H1 (cell line): ENCODE measurements at regions of chr11 and their contacts with region 1.

Region 1: GRCh38 chr11:118605116-118605867 is 2.1 kb upstream of the PHLDB1 start:
- DNase-seq: no peak
- H3K4me3 ChIP-seq: no peak overlapping the region
- H3K27ac ChIP-seq: no peak overlapping the region
- H3K4me1 ChIP-seq: peaks cover 12 to 32% (median 14%) of the 10 kb centered on the region in 4 experiments
- H3K27me3 ChIP-seq: peaks cover 38 to 64% (median 64%) of the 10 kb centered on the region in 4 experiments
- CTCF ChIP-seq: no peak
- EP300 ChIP-seq: no peak
- POLR2A ChIP-seq: no peak
- RAD21 ChIP-seq: no peak

Region 2: GRCh38 chr11:118581057-118581456 is 24.2 kb before region 1 on chr11:
- CTCF ChIA-PET with region 1: no interaction called
- POLR2A ChIA-PET with region 1: no interaction called
- DNase-seq: peak in 1 of 2 experiments; percentile 7
- H3K4me3 ChIP-seq: no peak overlapping the region
- H3K27ac ChIP-seq: no peak overlapping the region
- H3K4me1 ChIP-seq: no peaks in the 10 kb centered on the region
- H3K27me3 ChIP-seq: no peaks in the 10 kb centered on the region
- CTCF ChIP-seq: no peak
- EP300 ChIP-seq: no peak
- POLR2A ChIP-seq: no peak
- RAD21 ChIP-seq: no peak

Region 3: DNA sequence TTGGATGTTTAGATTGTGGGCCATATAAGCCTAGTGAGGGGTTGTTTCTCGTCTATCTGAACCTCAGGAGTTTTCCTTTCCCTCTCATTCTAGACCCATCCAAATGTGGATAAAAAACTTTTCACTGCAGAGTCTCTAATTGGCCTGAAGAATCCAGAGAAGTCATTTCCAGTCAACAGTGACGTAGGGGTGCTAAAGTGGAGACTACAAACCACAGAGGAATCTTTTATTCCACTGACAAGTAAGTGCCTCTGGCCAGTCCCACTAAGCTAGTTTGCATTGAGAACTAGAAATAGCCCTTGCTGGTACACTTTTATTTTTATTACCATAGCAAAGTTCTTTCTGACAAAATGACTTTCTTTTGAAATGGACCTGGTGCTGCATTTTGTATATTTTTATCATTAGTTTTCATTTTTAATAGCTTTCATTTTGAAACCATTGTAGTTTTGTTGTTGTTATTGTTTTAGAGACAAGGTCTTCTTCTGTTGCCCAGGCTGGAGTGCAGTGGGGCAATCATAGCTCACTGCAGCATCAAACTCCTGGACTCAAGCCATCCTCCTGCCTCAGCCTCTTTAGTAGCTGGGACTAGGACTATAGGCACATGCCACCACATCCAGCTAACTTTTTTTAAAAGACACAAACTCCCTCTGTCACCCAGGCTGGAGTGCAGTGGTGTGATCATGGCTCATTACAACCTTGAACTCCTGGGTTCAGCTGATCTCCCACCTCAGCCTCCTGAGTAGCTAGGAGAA is 12.5 kb before region 1 on chr11:
- CTCF ChIA-PET with region 1: interaction called, 86 read pairs
- POLR2A ChIA-PET with region 1: interaction called, 11 read pairs
- DNase-seq: no peak
- H3K4me3 ChIP-seq: no peak overlapping the region
- H3K27ac ChIP-seq: no peak overlapping the region
- H3K4me1 ChIP-seq: no peaks in the 10 kb centered on the region
- H3K27me3 ChIP-seq: no peaks in the 10 kb centered on the region
- CTCF ChIP-seq: no peak
- EP300 ChIP-seq: no peak
- POLR2A ChIP-seq: no peak
- RAD21 ChIP-seq: no peak